Right ventricle myocardium inferior (tissue), 1 donor: ENCODE measurements at regions of chr17 and their contacts with region 1.

Region 1: GRCh38 chr17:60392042-60392844 is at the start of gene USP32:
- DNase-seq: peak; percentile 99
- ATAC-seq: peak; percentile 98
- total RNA-seq, gene USP32: 32.2 TPM

Region 2: DNA sequence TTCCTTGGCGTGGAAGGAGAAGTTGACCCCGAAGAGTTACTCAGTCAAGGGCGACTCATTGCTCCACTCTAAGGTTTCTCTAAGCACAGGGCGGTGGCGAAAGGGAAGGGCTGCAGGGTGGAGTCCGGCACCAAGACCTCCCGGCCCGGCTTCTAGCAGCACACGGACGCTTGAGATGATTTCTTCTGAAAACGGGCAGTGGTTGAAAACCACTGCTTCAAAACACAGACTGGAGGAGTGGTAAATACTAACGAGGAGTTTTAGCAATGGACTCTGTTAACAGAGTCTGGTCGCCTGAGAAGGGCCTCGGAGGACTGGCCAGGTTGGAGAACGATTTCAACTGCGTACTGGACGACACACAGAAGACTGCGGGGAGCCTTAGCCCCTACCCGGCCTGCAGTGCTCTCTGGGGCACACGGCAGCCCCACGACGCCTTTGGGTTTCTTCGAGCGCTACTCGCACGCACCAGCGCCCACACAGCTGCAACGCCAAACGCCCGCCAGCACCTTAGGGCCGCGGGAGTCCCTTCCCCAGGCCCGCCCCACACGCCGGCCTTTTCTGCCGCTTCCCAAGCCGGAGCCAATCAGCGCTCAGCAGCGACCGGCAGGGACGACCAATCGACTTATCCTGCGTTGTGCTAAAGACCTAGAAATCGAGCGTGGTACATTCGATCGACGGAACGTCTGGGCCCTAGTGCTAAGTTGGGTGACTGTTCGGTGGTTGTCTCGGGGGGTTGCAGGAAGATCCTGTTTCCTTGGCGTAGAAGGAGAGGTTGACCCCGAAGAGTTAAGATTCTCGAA is 256.9 kb before region 1 on chr17:
- intact Hi-C with region 1: loop called (anchors 5 kb)
- DNase-seq: peak; percentile 94
- ATAC-seq: peak; percentile 97